ENCODE measurements at regions of chr2 and their contacts with region 1.

Region 1: GRCh38 chr2:74876081-74876886 is 42.4 kb downstream of the HK2 start:
- DNase-seq: peak; percentile 70
- H3K4me3 Mint-ChIP-seq: no peak overlapping the region
- H3K27ac Mint-ChIP-seq: peak overlapping the region; percentile 61
- H3K4me1 Mint-ChIP-seq: peaks cover 20% of the 10 kb centered on the region
- H3K27me3 Mint-ChIP-seq: no peaks in the 10 kb centered on the region
- CTCF ChIP-seq: peak; percentile 62

Region 2: DNA sequence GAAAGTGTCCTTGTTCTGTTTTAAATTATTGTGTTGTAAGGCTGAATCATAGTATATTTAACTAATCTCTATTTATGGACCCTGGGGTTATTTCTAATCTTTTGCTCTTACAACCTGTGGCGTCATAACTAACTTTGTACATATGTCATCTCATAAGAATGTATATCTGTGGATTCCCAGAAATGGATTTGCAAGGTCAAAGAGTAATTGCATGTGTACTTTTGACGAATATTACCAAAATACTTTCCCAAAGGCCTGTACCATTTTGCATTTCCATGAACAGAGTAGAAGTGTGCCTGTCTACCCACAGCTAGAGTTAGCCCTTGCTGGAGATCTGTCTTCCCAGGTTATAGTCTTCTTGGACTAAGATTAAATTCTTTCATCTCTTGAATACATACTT is 179.5 kb before region 1 on chr2:
- CTCF ChIA-PET with region 1: interaction called, 95 read pairs
- POLR2A ChIA-PET with region 1: interaction called, 4 read pairs
- intact Hi-C with region 1: no loop called
- DNase-seq: peak; percentile 30
- H3K4me3 Mint-ChIP-seq: no peak overlapping the region
- H3K27ac Mint-ChIP-seq: no peak overlapping the region
- H3K4me1 Mint-ChIP-seq: no peaks in the 10 kb centered on the region
- H3K27me3 Mint-ChIP-seq: peaks cover 24% of the 10 kb centered on the region
- CTCF ChIP-seq: no peak

Region 3: GRCh38 chr2:74740389-74741075 is 135.8 kb before region 1 on chr2:
- CTCF ChIA-PET with region 1: interaction called, 41 read pairs
- POLR2A ChIA-PET with region 1: interaction called, 20 read pairs
- intact Hi-C with region 1: no loop called
- DNase-seq: peak; percentile 98
- H3K4me3 Mint-ChIP-seq: peak overlapping the region; percentile 28
- H3K27ac Mint-ChIP-seq: peak overlapping the region; percentile 95
- H3K4me1 Mint-ChIP-seq: peaks cover 26% of the 10 kb centered on the region
- H3K27me3 Mint-ChIP-seq: no peaks in the 10 kb centered on the region
- CTCF ChIP-seq: no peak

Region 4: GRCh38 chr2:74768401-74768914 is 107.8 kb before region 1 on chr2:
- CTCF ChIA-PET with region 1: no interaction called
- POLR2A ChIA-PET with region 1: no interaction called
- intact Hi-C with region 1: no loop called
- DNase-seq: no peak
- H3K4me3 Mint-ChIP-seq: no peak overlapping the region
- H3K27ac Mint-ChIP-seq: no peak overlapping the region
- H3K4me1 Mint-ChIP-seq: no peaks in the 10 kb centered on the region
- H3K27me3 Mint-ChIP-seq: no peaks in the 10 kb centered on the region
- CTCF ChIP-seq: no peak

Region 5: GRCh38 chr2:74845217-74846011 is 30.9 kb before region 1 on chr2:
- CTCF ChIA-PET with region 1: interaction called, 140 read pairs
- POLR2A ChIA-PET with region 1: interaction called, 7 read pairs
- intact Hi-C with region 1: no loop called
- DNase-seq: peak; percentile 96
- H3K4me3 Mint-ChIP-seq: peak overlapping the region; percentile 50
- H3K27ac Mint-ChIP-seq: peak overlapping the region; percentile 96
- H3K4me1 Mint-ChIP-seq: peaks cover 57% of the 10 kb centered on the region
- H3K27me3 Mint-ChIP-seq: no peaks in the 10 kb centered on the region
- CTCF ChIP-seq: no peak

Region 6: DNA sequence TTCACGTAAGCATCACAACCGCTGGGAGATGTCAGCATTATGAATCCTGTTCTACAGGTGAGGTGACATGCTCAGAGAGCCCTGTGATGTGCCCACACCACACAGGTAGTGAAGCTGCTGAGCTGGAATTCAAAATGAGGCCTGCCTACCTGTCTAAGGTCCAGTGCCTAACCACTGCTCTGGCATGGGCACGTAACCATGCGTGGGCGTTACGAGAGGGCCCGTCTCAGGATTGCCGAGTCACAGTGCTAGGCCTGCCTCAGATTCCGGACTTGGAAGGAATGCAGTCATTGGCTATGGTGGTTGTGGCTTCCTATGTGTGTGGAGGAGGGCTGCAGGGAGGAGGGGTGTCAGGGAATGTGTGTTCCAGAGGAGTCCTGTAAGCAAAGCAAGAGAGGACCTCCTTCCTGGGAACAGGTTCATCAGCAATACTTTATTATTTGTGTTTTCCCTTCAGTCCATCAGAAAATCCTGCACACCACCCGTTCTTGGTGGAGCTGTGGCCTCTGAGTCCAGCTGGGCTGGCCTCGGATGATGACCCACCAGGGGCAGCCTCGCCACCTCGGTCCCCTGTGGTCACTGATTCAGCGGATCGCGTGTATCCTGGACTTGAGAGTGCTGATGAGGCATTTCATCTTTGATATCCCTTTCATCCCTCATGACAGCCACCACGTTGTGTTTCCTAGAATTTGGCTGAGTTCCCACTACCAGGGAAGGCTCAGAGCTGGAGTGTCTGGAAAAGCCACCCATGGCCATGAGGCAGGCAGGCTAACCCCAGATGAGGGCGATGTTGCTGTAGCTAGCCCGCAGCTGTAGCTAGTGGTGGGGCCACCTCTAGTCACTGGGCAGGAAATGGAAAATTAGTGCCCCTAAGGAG is 11.2 kb before region 1 on chr2:
- CTCF ChIA-PET with region 1: interaction called, 25 read pairs
- POLR2A ChIA-PET with region 1: interaction called, 3 read pairs
- intact Hi-C with region 1: no loop called
- DNase-seq: peak; percentile 74
- H3K4me3 Mint-ChIP-seq: no peak overlapping the region
- H3K27ac Mint-ChIP-seq: peak overlapping the region; percentile 31
- H3K4me1 Mint-ChIP-seq: peaks cover 10% of the 10 kb centered on the region
- H3K27me3 Mint-ChIP-seq: no peaks in the 10 kb centered on the region
- CTCF ChIP-seq: no peak

Region 7: DNA sequence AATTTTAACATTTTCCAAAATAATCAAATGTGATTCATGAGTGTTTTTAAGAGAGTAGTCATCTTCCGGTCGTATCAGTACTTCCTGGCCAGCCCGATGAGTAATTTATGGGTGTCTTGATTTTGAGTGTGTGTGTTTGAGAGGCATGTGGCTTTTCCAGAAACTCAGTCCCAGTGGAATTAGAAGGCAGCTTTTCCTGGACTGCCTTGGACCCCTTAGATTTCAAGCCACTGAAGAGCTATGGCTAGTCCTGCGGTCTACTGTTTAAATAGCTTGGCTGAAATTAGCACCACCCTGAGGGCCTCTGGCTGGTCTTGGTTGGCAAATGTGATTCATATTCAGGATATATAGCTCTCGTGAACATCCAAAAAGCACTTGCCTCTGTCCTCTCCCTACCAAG is 17.0 kb after region 1 on chr2:
- CTCF ChIA-PET with region 1: interaction called, 11 read pairs
- POLR2A ChIA-PET with region 1: no interaction called
- intact Hi-C with region 1: no loop called
- DNase-seq: peak; percentile 63
- H3K4me3 Mint-ChIP-seq: no peak overlapping the region
- H3K27ac Mint-ChIP-seq: peak overlapping the region; percentile 52
- H3K4me1 Mint-ChIP-seq: peaks cover 10% of the 10 kb centered on the region
- H3K27me3 Mint-ChIP-seq: no peaks in the 10 kb centered on the region
- CTCF ChIP-seq: no peak